Activated B cell treated with CpG ODN at 0.5 μM for 24 hours (primary cell): ENCODE measurements at regions of chr20 and their contacts with region 1.

Region 1: DNA sequence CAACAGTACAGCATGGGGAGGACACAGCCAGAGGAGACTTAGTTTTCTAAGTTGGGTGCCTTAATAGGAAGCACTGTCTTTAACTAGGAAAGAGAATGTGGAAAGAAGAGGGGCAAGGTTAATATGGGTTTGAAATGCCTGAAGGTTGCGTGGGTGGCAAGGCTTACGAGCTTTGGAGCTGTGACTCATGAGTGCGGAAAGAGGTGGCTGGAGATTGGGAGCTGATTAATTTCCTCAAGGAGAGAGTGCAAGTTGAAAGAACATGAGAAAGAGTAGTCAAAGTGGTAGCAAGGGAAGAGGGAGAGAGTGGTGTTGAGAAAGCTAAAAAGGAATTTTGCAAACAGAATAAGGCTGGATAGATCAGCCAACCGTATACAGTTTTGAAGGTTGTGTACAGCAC is 315.1 kb upstream of the PRND start:
- DNase-seq: no peak
- ATAC-seq: no peak
- H3K4me3 Mint-ChIP-seq: no peak overlapping the region
- H3K27ac Mint-ChIP-seq: no peak overlapping the region
- H3K4me1 Mint-ChIP-seq: peaks cover 3% of the 10 kb centered on the region
- H3K27me3 Mint-ChIP-seq: peaks cover 10% of the 10 kb centered on the region
- CTCF ChIP-seq: no peak

Region 2: GRCh38 chr20:4344670-4345069 is 62.0 kb before region 1 on chr20:
- CTCF ChIA-PET with region 1: no interaction called
- POLR2A ChIA-PET with region 1: no interaction called
- intact Hi-C with region 1: loop called (anchors 2 kb)
- DNase-seq: no peak
- ATAC-seq: no peak
- H3K4me3 Mint-ChIP-seq: no peak overlapping the region
- H3K27ac Mint-ChIP-seq: no peak overlapping the region
- H3K4me1 Mint-ChIP-seq: no peaks in the 10 kb centered on the region
- H3K27me3 Mint-ChIP-seq: peaks cover 7% of the 10 kb centered on the region
- CTCF ChIP-seq: no peak

Region 3: GRCh38 chr20:4457566-4458543 is 51.2 kb after region 1 on chr20:
- CTCF ChIA-PET with region 1: no interaction called
- POLR2A ChIA-PET with region 1: no interaction called
- intact Hi-C with region 1: loop called (anchors 5 kb)
- DNase-seq: no peak
- ATAC-seq: no peak
- H3K4me3 Mint-ChIP-seq: no peak overlapping the region
- H3K27ac Mint-ChIP-seq: no peak overlapping the region
- H3K4me1 Mint-ChIP-seq: no peaks in the 10 kb centered on the region
- H3K27me3 Mint-ChIP-seq: peaks cover 3% of the 10 kb centered on the region
- CTCF ChIP-seq: no peak